ENCODE measurements at regions of chr16 and their contacts with region 1.

Region 1: GRCh38 chr16:67561824-67562525 is 351 bp upstream of the CTCF start:
- DNase-seq: peak; percentile 98
- H3K4me3 ChIP-seq: peak overlapping the region; percentile 79 to 96 (median 90)
- H3K27ac ChIP-seq: peak overlapping the region; percentile 98 to 99 (median 98)
- H3K4me1 ChIP-seq: peaks cover 0 to 30% (median 24%) of the 10 kb centered on the region in 4 donors
- H3K27me3 ChIP-seq: no peaks in the 10 kb centered on the region
- CTCF ChIP-seq: no peak
- EP300 ChIP-seq: peak in 1 of 4 donors; percentile 18
- POLR2A ChIP-seq: peak; percentile 32 to 52

Region 2: DNA sequence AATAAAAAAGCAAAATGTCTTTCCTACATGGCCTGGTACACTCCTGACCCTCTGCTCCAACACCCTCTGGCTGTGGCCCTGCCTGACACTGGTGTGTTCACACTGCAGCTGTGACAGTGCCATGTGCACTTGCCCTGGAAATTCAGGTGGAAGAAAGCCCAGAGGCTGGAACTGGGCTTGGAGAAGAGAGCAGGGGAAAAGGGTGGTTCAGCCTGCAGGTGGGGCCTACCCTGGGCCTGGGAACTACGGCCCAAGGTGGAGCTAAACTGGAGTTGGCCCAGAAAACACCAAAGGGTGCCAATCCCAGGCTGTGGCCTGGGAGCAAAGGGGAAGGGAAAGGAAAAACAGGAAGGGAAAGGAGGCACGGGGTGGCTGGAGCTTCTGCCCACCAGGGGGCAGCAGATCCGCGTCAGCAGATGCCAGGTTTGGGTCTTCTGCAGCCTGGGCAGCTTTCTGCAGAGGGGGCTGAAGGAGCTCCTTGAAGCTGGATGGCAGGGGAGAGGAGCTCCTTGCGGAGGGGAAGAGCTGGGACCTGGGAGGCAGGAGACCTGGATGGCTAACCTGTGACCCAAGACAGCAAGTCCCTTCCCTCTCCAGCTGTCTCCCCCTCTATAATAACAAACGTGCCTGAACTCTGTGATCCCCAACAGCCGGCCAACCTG is 15.1 kb before region 1 on chr16:
- intact Hi-C with region 1: no loop called
- DNase-seq: peak; percentile 85
- H3K4me3 ChIP-seq: no peak overlapping the region
- H3K27ac ChIP-seq: peak overlapping the region; percentile 24 to 50 (median 32)
- H3K4me1 ChIP-seq: peaks cover 0 to 21% (median 13%) of the 10 kb centered on the region in 4 donors
- H3K27me3 ChIP-seq: no peaks in the 10 kb centered on the region
- CTCF ChIP-seq: peak; percentile 83 to 94 (median 91)
- EP300 ChIP-seq: no peak
- POLR2A ChIP-seq: no peak

Region 3: GRCh38 chr16:67641779-67642708 is 80.1 kb after region 1 on chr16:
- intact Hi-C with region 1: loop called (anchors 5 kb)
- DNase-seq: peak; percentile 89
- H3K4me3 ChIP-seq: no peak overlapping the region
- H3K27ac ChIP-seq: peak overlapping the region; percentile 6 to 51 (median 50)
- H3K4me1 ChIP-seq: peaks cover 0 to 32% (median 22%) of the 10 kb centered on the region in 4 donors
- H3K27me3 ChIP-seq: peaks cover 18 to 29% (median 22%) of the 10 kb centered on the region in 3 donors
- CTCF ChIP-seq: no peak
- EP300 ChIP-seq: no peak
- POLR2A ChIP-seq: no peak

Region 4: DNA sequence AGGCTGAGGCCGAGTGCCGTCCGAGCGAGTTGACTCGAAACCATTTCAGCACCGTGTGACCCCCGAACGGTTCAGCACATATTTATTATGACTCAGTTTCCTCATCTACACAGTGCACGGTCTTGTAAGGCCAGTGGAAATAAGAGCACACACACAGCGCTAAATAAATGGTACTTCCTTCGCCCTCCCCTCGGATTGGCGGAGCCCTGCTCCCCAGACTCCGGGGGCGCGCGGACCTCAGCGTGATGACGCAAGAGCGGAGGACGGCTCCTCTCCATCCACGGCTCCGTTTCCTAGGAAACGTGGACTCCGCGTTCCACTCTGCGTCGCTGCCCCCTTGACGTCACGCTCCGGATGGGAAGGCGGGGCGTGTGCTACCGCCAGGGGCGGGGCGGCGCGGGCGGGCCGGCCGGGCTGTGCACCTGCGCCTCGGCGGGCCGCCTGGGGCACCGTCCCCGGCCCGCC is 98.6 kb after region 1 on chr16 and contains the start of gene PARD6A:
- intact Hi-C with region 1: loop called (anchors 1 kb)
- DNase-seq: peak; percentile 99
- H3K4me3 ChIP-seq: peak within 1 kb of the TSS; percentile 65 to 94 (median 80)
- H3K27ac ChIP-seq: peak within 1 kb of the TSS; percentile 92 to 96 (median 96)
- H3K4me1 ChIP-seq: peaks cover 0 to 29% (median 26%) of the 10 kb centered on the region in 4 donors
- H3K27me3 ChIP-seq: peaks cover 0 to under 1% (median 0%) of the 10 kb centered on the region in 3 donors
- CTCF ChIP-seq: no peak
- EP300 ChIP-seq: peak in 1 of 4 donors; percentile 42
- POLR2A ChIP-seq: no peak
- total RNA-seq, gene PARD6A: 12.8 to 16.6 (median 14.0) TPM

Region 5: GRCh38 chr16:67667817-67668494 is 106.0 kb after region 1 on chr16:
- intact Hi-C with region 1: loop called (anchors 2 kb)
- DNase-seq: peak; percentile 95
- H3K4me3 ChIP-seq: peak overlapping the region; percentile 76 to 99 (median 84)
- H3K27ac ChIP-seq: peak overlapping the region; percentile 91 to 95 (median 92)
- H3K4me1 ChIP-seq: peaks cover 0 to 33% (median 28%) of the 10 kb centered on the region in 4 donors
- H3K27me3 ChIP-seq: no peaks in the 10 kb centered on the region
- CTCF ChIP-seq: peak; percentile 80 to 90 (median 87)
- EP300 ChIP-seq: no peak
- POLR2A ChIP-seq: no peak